ENCODE measurements at regions of chr2 and their contacts with region 1.

Region 1: DNA sequence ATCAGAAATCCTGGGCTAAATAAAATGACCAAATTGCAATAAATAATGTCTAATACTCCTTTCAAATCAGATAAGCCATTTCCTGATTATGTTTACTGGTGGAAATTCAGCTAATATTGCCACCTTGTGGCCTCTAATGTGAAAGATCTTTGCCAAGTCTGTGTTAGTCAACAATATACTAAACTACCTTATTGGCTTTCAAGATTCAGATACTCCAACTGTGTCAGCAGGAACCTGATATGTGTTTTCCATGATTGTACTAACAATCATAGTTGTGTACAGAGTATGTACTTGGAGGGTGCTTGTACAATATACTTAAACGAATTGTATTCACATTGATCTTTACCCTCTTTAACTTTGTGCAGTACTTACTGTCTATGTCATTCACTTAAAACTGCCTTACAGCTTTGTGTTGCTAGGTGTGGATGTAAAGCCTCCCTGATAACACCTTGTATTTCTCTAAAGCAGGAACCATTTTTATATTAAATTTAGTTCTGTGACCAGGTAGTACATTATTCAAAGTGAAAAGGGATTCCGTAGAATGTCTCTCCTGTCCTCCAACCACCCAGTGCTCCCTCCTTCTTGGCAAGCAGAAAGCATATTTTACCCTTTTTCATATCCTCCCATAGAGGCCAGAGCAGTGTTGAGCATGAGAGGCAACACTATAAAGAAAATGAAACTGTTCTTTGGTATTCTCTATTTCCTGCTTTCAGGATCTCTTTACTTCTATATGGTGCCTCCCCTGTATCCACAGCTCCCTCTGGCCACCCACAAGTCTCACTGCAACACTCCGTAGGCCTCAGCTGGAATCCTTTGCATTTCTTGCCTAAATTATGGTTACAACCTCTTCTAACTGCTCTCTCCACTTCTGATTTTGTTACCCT is 75.2 kb upstream of the C2orf15 start:
- DNase-seq: peak; percentile 6 to 27 (median 10)
- ATAC-seq: peak; percentile 87
- H3K4me3 ChIP-seq: no peak overlapping the region
- H3K27ac ChIP-seq: no peak overlapping the region
- H3K4me1 ChIP-seq: no peaks in the 10 kb centered on the region
- H3K27me3 ChIP-seq: no peaks in the 10 kb centered on the region
- CTCF ChIP-seq: peak; percentile 42 to 59 (median 44); a peak in 5 of 6 replicates
- EP300 ChIP-seq: no peak
- POLR2A ChIP-seq: no peak
- RAD21 ChIP-seq: peak in 1 of 2 experiments; percentile 73; a peak in 3 of 4 replicates

Region 2: GRCh38 chr2:98560256-98560771 is 506.0 kb before region 1 on chr2:
- CTCF ChIA-PET with region 1: no interaction called
- POLR2A ChIA-PET with region 1: no interaction called
- in situ Hi-C with region 1: no loop called
- intact Hi-C with region 1: no loop called
- DNase-seq: peak; percentile 91 to 94 (median 94)
- ATAC-seq: peak; percentile 99
- H3K4me3 ChIP-seq: peak overlapping the region; percentile 5; the same call in 1 of the 2 replicates
- H3K27ac ChIP-seq: peak overlapping the region; percentile 84
- H3K4me1 ChIP-seq: peaks cover 15 to 24% of the 10 kb centered on the region in 2 experiments
- H3K27me3 ChIP-seq: no peaks in the 10 kb centered on the region
- CTCF ChIP-seq: no peak
- EP300 ChIP-seq: peak; percentile 48; the same call in 1 of the 2 replicates
- POLR2A ChIP-seq: peak; percentile 63
- RAD21 ChIP-seq: no peak

Region 3: DNA sequence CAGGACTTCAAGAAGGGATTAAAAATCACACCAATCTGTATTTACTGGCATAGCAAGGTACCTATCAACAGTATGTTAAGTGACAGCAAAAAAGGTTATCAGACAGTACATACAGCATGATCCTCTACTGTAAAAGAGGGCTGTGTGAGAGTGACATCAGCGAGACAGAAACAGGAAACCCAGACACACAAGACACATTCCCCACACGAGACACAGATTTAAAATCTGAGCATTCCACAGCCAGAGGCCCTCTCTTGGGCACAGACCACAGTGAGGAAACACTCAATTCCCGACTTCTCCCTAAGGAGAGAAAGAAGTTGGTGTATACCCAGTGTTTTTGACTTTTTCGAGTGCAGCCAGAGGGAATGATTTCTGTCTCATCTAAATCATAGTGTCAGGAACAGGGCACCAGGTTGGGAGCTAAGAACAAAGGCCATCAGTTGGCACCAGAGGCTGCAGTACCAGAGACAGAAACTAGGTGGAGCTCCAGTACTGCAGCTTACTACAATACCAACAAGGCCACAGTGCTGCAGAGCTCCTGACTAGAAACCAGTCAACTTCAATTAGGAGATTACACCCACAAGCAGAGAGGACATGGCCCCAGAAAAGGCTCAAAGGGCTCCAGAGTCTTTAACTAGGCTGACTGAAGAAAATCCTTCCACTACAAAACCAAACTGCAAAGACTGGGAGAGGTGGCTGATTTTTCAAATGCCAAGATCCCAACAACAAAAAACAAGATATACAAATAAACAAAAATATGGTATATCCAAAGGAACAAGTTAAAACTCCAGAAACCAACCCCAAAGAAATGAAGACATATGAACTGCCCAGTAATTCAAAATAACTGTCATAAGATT is 417.0 kb before region 1 on chr2:
- CTCF ChIA-PET with region 1: interaction called, 3 read pairs
- POLR2A ChIA-PET with region 1: no interaction called
- in situ Hi-C with region 1: no loop called
- intact Hi-C with region 1: loop called (anchors 2 kb)
- DNase-seq: peak; percentile 42 to 72 (median 52)
- ATAC-seq: peak; percentile 90
- H3K4me3 ChIP-seq: no peak overlapping the region
- H3K27ac ChIP-seq: no peak overlapping the region
- H3K4me1 ChIP-seq: no peaks in the 10 kb centered on the region
- H3K27me3 ChIP-seq: peaks cover 0 to 5% of the 10 kb centered on the region in 2 experiments; a peak in 2 of 5 replicates
- CTCF ChIP-seq: peak; percentile 85 to 93 (median 88)
- EP300 ChIP-seq: no peak
- POLR2A ChIP-seq: no peak
- RAD21 ChIP-seq: peak; percentile 78 to 92

Region 4: GRCh38 chr2:98869940-98870263 is 196.4 kb before region 1 on chr2:
- CTCF ChIA-PET with region 1: no interaction called
- POLR2A ChIA-PET with region 1: no interaction called
- in situ Hi-C with region 1: no loop called
- intact Hi-C with region 1: loop called (anchors 5 kb)
- DNase-seq: no peak
- ATAC-seq: no peak
- H3K4me3 ChIP-seq: no peak overlapping the region
- H3K27ac ChIP-seq: no peak overlapping the region
- H3K4me1 ChIP-seq: no peaks in the 10 kb centered on the region; a peak in 1 of 5 replicates
- H3K27me3 ChIP-seq: peaks cover 10 to 34% of the 10 kb centered on the region in 2 experiments
- CTCF ChIP-seq: no peak
- EP300 ChIP-seq: no peak
- POLR2A ChIP-seq: no peak
- RAD21 ChIP-seq: no peak

Measured in K562 (cell line).